ENCODE measurements at regions of chr5 and their contacts with region 1.

Region 1: GRCh38 chr5:140401362-140402257 is at the start of gene ANKHD1:
- DNase-seq: peak; percentile 96 to 100 (median 99)
- H3K4me3 ChIP-seq: peak within 1 kb of the TSS; percentile 90 to 99
- H3K4me3 Mint-ChIP-seq: no peak within 1 kb of the TSS
- H3K27ac ChIP-seq: peak within 1 kb of the TSS; percentile 90
- H3K27ac Mint-ChIP-seq: no peak within 1 kb of the TSS
- H3K4me1 ChIP-seq: peaks cover 45% of the 10 kb centered on the region
- H3K4me1 Mint-ChIP-seq: peaks cover 23 to 45% (median 33%) of the 10 kb centered on the region in 4 donors
- H3K27me3 ChIP-seq: no peaks in the 10 kb centered on the region
- H3K27me3 Mint-ChIP-seq: no peaks in the 10 kb centered on the region
- total RNA-seq, gene ANKHD1: 228 to 252 TPM

Region 2: DNA sequence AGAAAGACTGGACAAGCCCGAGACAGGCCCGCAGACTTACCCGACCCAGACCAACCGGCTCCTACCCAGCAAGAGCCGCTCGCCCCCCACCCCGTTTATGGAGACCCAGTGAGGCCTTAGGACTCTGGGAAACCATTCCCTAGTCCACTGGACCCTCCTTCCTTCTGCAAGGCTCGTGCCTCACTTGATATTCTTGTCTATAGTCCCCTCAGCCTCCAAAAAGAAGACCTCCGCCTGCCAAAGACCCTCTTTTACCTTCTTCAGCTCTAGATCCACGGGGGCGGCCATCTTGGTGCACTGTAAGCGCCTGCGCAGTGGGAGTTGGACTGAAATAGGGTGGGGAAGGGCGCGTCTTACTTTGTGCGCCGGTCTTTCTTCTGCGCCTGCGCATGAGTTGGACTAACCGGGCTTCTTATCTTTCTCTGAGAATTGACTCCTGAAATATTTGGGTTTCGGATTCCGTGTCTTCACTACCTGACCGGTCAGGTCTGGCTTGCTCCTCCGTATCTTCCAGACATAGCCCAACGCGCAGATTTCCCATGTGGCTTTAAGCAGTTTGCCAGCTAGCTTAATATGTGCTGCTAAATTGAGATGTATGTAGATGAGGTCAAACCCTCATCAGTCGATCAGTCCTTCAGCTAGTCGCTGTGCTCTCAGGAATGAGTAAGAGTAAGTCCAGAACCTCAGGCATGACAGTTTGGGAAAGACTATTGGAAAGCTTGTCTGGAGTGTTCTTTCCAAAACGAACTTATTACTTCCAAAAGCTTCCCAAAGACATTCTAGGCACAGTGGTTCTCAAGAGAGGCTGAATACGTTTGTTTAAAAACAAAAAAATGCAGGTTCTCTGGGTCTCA is 98.6 kb before region 1 on chr5 and contains the start of gene PFDN1:
- CTCF ChIA-PET with region 1: no interaction called
- POLR2A ChIA-PET with region 1: interaction called, 4 read pairs
- intact Hi-C with region 1: loop called (anchors 2 kb)
- DNase-seq: peak; percentile 89 to 94 (median 92)
- H3K4me3 ChIP-seq: peak within 1 kb of the TSS; percentile 87 to 92
- H3K4me3 Mint-ChIP-seq: peak within 1 kb of the TSS; percentile 96 to 100 (median 100)
- H3K27ac ChIP-seq: peak within 1 kb of the TSS; percentile 81
- H3K27ac Mint-ChIP-seq: peak within 1 kb of the TSS; percentile 85 to 99 (median 99)
- H3K4me1 ChIP-seq: peaks cover 16% of the 10 kb centered on the region
- H3K4me1 Mint-ChIP-seq: peaks cover 15 to 26% (median 23%) of the 10 kb centered on the region in 4 donors
- H3K27me3 ChIP-seq: no peaks in the 10 kb centered on the region
- H3K27me3 Mint-ChIP-seq: peaks cover 0 to 3% of the 10 kb centered on the region in 2 donors
- total RNA-seq, gene PFDN1: 24.8 to 26.2 TPM

Region 3: GRCh38 chr5:140557136-140557805 is 155.7 kb after region 1 on chr5 and contains the start of gene SRA1:
- CTCF ChIA-PET with region 1: no interaction called
- POLR2A ChIA-PET with region 1: interaction called, 9 read pairs
- intact Hi-C with region 1: loop called (anchors 2 kb)
- DNase-seq: peak; percentile 75 to 86 (median 77)
- H3K4me3 ChIP-seq: peak within 1 kb of the TSS; percentile 60 to 81
- H3K4me3 Mint-ChIP-seq: peak within 1 kb of the TSS; percentile 82 to 92 (median 92)
- H3K27ac ChIP-seq: peak within 1 kb of the TSS; percentile 92
- H3K27ac Mint-ChIP-seq: peak within 1 kb of the TSS; percentile 73 to 98 (median 97)
- H3K4me1 ChIP-seq: peaks cover 41% of the 10 kb centered on the region
- H3K4me1 Mint-ChIP-seq: peaks cover 33 to 55% (median 43%) of the 10 kb centered on the region in 4 donors
- H3K27me3 ChIP-seq: no peaks in the 10 kb centered on the region
- H3K27me3 Mint-ChIP-seq: no peaks in the 10 kb centered on the region
- total RNA-seq, gene SRA1: 24.5 to 26.6 TPM

Region 4: GRCh38 chr5:140639148-140639979 is 237.8 kb after region 1 on chr5 and contains the start of gene TMCO6:
- CTCF ChIA-PET with region 1: no interaction called
- POLR2A ChIA-PET with region 1: interaction called, 13 read pairs
- intact Hi-C with region 1: loop called (anchors 1 kb)
- DNase-seq: peak; percentile 92 to 95 (median 95)
- H3K4me3 ChIP-seq: peak within 1 kb of the TSS; percentile 71 to 84
- H3K4me3 Mint-ChIP-seq: peak within 1 kb of the TSS; percentile 90 to 98 (median 93)
- H3K27ac ChIP-seq: peak within 1 kb of the TSS; percentile 69
- H3K27ac Mint-ChIP-seq: peak within 1 kb of the TSS; percentile 90 to 99 (median 96)
- H3K4me1 ChIP-seq: peaks cover 22% of the 10 kb centered on the region
- H3K4me1 Mint-ChIP-seq: peaks cover 21 to 50% (median 34%) of the 10 kb centered on the region in 4 donors
- H3K27me3 ChIP-seq: no peaks in the 10 kb centered on the region
- H3K27me3 Mint-ChIP-seq: no peaks in the 10 kb centered on the region
- total RNA-seq, gene TMCO6: 50.0 to 56.3 TPM

Region 5: GRCh38 chr5:140690941-140691924 is 289.6 kb after region 1 on chr5 and contains the starts of genes HARS1 and HARS2:
- CTCF ChIA-PET with region 1: no interaction called
- POLR2A ChIA-PET with region 1: interaction called, 26 read pairs
- intact Hi-C with region 1: no loop called
- DNase-seq: peak; percentile 77 to 89 (median 78)
- H3K4me3 ChIP-seq: peak within 1 kb of the TSS; percentile 91
- H3K4me3 Mint-ChIP-seq: peak within 1 kb of the TSS; percentile 97 to 100 (median 99)
- H3K27ac ChIP-seq: peak within 1 kb of the TSS; percentile 83
- H3K27ac Mint-ChIP-seq: peak within 1 kb of the TSS; percentile 97 to 100 (median 98)
- H3K4me1 ChIP-seq: peaks cover 34% of the 10 kb centered on the region
- H3K4me1 Mint-ChIP-seq: peaks cover 23 to 47% (median 37%) of the 10 kb centered on the region in 4 donors
- H3K27me3 ChIP-seq: no peaks in the 10 kb centered on the region
- H3K27me3 Mint-ChIP-seq: no peaks in the 10 kb centered on the region
- total RNA-seq, gene HARS1: 60.7 to 63.5 TPM
- total RNA-seq, gene HARS2: 61.6 to 67.5 TPM

Region 6: GRCh38 chr5:141320225-141321169 is 918.9 kb after region 1 on chr5 and contains the start of gene TAF7:
- CTCF ChIA-PET with region 1: no interaction called
- POLR2A ChIA-PET with region 1: interaction called, 6 read pairs
- intact Hi-C with region 1: loop called (anchors 2 kb)
- DNase-seq: peak; percentile 92 to 93 (median 93)
- H3K4me3 ChIP-seq: peak within 1 kb of the TSS; percentile 54 to 77
- H3K4me3 Mint-ChIP-seq: peak within 1 kb of the TSS; percentile 90 to 99 (median 98)
- H3K27ac ChIP-seq: peak within 1 kb of the TSS; percentile 97
- H3K27ac Mint-ChIP-seq: peak within 1 kb of the TSS; percentile 93 to 100 (median 97)
- H3K4me1 ChIP-seq: peaks cover 15% of the 10 kb centered on the region
- H3K4me1 Mint-ChIP-seq: peaks cover 20 to 32% (median 26%) of the 10 kb centered on the region in 4 donors
- H3K27me3 ChIP-seq: no peaks in the 10 kb centered on the region
- H3K27me3 Mint-ChIP-seq: peaks cover 0 to 2% of the 10 kb centered on the region in 2 donors
- total RNA-seq, gene TAF7: 109 to 119 TPM

Region 7: DNA sequence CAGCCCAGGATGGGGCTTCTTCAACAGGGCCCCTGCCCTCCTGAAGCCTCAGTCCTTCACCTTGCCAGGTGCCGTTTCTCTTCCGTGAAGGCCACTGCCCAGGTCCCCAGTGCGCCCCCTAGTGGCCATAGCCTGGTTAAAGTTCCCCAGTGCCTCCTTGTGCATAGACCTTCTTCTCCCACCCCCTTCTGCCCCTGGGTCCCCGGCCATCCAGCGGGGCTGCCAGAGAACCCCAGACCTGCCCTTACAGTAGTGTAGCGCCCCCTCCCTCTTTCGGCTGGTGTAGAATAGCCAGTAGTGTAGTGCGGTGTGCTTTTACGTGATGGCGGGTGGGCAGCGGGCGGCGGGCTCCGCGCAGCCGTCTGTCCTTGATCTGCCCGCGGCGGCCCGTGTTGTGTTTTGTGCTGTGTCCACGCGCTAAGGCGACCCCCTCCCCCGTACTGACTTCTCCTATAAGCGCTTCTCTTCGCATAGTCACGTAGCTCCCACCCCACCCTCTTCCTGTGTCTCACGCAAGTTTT is 1110.8 kb after region 1 on chr5:
- CTCF ChIA-PET with region 1: no interaction called
- POLR2A ChIA-PET with region 1: no interaction called
- intact Hi-C with region 1: no loop called
- DNase-seq: peak; percentile 73 to 80 (median 76)
- H3K4me3 ChIP-seq: peak overlapping the region in 1 of 2 donors; percentile 70
- H3K4me3 Mint-ChIP-seq: peak overlapping the region; percentile 76 to 95 (median 90)
- H3K27ac ChIP-seq: no peak overlapping the region
- H3K27ac Mint-ChIP-seq: peak overlapping the region; percentile 6 to 89 (median 67)
- H3K4me1 ChIP-seq: peaks cover 20% of the 10 kb centered on the region
- H3K4me1 Mint-ChIP-seq: peaks cover 14 to 28% (median 22%) of the 10 kb centered on the region in 4 donors
- H3K27me3 ChIP-seq: no peaks in the 10 kb centered on the region
- H3K27me3 Mint-ChIP-seq: peaks cover 0 to 3% of the 10 kb centered on the region in 2 donors

Measured in CD4-positive, alpha-beta memory T cell (primary cell).